ENCODE measurements at regions of chr2 and their contacts with region 1.

Region 1: GRCh38 chr2:176001916-176002687 is at the start of gene LNPK:
- DNase-seq: peak in 1 of 2 donors; percentile 97
- H3K4me3 ChIP-seq: peak within 1 kb of the TSS; percentile 69 to 82
- H3K27ac ChIP-seq: peak within 1 kb of the TSS; percentile 82
- H3K4me1 ChIP-seq: peaks cover 38% of the 10 kb centered on the region
- H3K27me3 ChIP-seq: no peaks in the 10 kb centered on the region
- CTCF ChIP-seq: no peak
- POLR2A ChIP-seq: peak in 1 of 2 donors; percentile 50
- total RNA-seq, gene LNPK: 32.7 TPM

Region 2: GRCh38 chr2:176079831-176080539 is 77.9 kb after region 1 on chr2:
- intact Hi-C with region 1: loop called (anchors 5 kb)
- DNase-seq: no peak
- H3K4me3 ChIP-seq: peak overlapping the region; percentile 49 to 52
- H3K27ac ChIP-seq: peak overlapping the region; percentile 93
- H3K4me1 ChIP-seq: peaks cover 37% of the 10 kb centered on the region
- H3K27me3 ChIP-seq: peaks cover 9% of the 10 kb centered on the region
- CTCF ChIP-seq: peak; percentile 71 to 87 (median 77)
- POLR2A ChIP-seq: no peak

Region 3: DNA sequence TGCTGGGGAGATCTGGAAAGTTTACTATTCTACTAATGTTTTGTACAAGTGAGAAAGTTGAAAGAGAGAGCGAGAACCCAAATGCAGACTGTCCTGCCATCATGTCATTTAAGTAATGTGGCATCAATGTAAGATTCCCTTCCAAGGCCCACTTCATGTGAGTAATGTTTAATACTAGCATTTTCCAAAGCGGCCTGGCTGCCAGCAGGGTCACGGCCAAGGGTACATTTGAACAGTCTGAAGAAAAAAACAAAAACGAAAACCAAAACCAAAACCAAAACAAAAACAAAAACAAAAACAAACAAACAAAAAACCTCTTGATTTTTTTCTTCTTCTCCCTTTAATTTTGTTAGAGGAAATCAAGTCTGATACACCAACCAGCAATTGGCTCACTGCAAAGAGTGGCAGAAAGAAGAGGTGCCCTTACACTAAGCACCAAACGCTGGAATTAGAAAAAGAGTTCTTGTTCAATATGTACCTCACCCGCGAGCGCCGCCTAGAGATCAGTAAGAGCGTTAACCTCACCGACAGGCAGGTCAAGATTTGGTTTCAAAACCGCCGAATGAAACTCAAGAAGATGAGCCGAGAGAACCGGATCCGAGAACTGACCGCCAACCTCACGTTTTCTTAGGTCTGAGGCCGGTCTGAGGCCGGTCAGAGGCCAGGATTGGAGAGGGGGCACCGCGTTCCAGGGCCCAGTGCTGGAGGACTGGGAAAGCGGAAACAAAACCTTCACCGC is 116.7 kb after region 1 on chr2:
- intact Hi-C with region 1: no loop called
- DNase-seq: no peak
- H3K4me3 ChIP-seq: peak overlapping the region; percentile 15 to 40
- H3K27ac ChIP-seq: peak overlapping the region; percentile 76
- H3K4me1 ChIP-seq: peaks cover 24% of the 10 kb centered on the region
- H3K27me3 ChIP-seq: no peaks in the 10 kb centered on the region
- CTCF ChIP-seq: no peak
- POLR2A ChIP-seq: no peak

Region 4: GRCh38 chr2:176157499-176158185 is 155.5 kb after region 1 on chr2:
- intact Hi-C with region 1: no loop called
- DNase-seq: no peak
- H3K4me3 ChIP-seq: no peak overlapping the region
- H3K27ac ChIP-seq: no peak overlapping the region
- H3K4me1 ChIP-seq: peaks cover 30% of the 10 kb centered on the region
- H3K27me3 ChIP-seq: peaks cover 15% of the 10 kb centered on the region
- CTCF ChIP-seq: no peak
- POLR2A ChIP-seq: no peak

Measured in vagina (tissue), 2 donors.